GM18951 (cell line): ENCODE measurements at regions of chr9 and their contacts with region 1.

Region 1: GRCh38 chr9:98962181-98962560 is 18.5 kb downstream of the COL15A1 start:
- POLR2A ChIP-seq: no peak

Region 2: DNA sequence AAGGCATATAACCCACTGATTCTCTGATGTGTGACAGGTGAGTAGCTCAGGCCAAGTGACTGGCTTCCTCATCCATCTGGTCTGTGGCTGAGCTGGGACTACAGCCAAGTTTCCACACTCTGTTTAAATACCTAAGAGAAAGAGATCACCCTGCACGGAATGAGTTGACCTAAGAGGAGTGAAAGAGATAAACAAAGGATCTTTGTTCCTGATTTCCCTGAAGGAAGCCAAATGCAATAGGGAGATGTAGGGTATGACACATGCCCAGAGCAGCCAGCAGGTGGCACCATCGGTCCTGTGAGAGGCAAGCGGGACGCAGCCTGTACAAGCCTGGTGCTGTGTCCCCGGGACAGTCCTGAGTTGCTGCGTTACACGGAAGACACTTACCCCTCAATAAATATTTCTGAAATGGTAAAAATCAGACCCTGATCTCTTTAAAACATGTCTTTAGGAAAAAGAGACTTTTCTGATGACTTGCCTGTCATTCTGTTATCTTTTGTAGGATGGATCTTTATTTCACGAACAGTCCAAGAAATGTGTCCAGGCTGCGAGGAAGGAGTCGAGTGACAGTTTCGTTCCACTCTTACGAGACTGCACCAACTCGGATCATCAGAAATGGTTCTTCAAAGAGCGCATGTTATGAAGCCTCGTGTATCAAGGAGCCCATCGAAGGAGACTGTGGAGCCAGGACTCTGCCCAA is 113.6 kb before region 1 on chr9:
- in situ Hi-C with region 1: loop called (anchors 10 kb)
- POLR2A ChIP-seq: no peak

Region 3: GRCh38 chr9:99104459-99105151 is 142.4 kb after region 1 on chr9 and contains the start of gene TGFBR1:
- in situ Hi-C with region 1: no loop called
- POLR2A ChIP-seq: no peak